ENCODE measurements at regions of chr17 and their contacts with region 1.

Region 1: GRCh38 chr17:56819431-56820145 is 14.1 kb downstream of the C17orf67 start:
- DNase-seq: peak; percentile 73 to 86 (median 78)
- H3K4me3 ChIP-seq: peak overlapping the region in 2 of 7 experiments; percentile 19 to 29
- H3K27ac ChIP-seq: no peak overlapping the region
- H3K4me1 ChIP-seq: peaks cover 0 to 12% (median 6%) of the 10 kb centered on the region in 4 experiments
- H3K27me3 ChIP-seq: no peaks in the 10 kb centered on the region

Region 2: GRCh38 chr17:56786989-56787482 is 32.6 kb before region 1 on chr17:
- CTCF ChIA-PET with region 1: interaction called, 12 read pairs
- POLR2A ChIA-PET with region 1: interaction called, 3 read pairs
- DNase-seq: peak; percentile 92 to 99 (median 98)
- H3K4me3 ChIP-seq: no peak overlapping the region
- H3K27ac ChIP-seq: peak overlapping the region; percentile 39 to 52
- H3K4me1 ChIP-seq: peaks cover 14 to 54% (median 40%) of the 10 kb centered on the region in 4 experiments
- H3K27me3 ChIP-seq: no peaks in the 10 kb centered on the region

Region 3: GRCh38 chr17:56834380-56835268 is 15.0 kb after region 1 on chr17:
- CTCF ChIA-PET with region 1: interaction called, 10 read pairs
- POLR2A ChIA-PET with region 1: no interaction called
- DNase-seq: peak; percentile 75 to 89 (median 87)
- H3K4me3 ChIP-seq: peak overlapping the region; percentile 55 to 89 (median 70)
- H3K27ac ChIP-seq: peak overlapping the region; percentile 40 to 77
- H3K4me1 ChIP-seq: peaks cover 21 to 49% (median 31%) of the 10 kb centered on the region in 4 experiments
- H3K27me3 ChIP-seq: no peaks in the 10 kb centered on the region

Measured in common myeloid progenitor, CD34-positive (primary cell).